ENCODE measurements at regions of chr5 and their contacts with region 1.

Region 1: DNA sequence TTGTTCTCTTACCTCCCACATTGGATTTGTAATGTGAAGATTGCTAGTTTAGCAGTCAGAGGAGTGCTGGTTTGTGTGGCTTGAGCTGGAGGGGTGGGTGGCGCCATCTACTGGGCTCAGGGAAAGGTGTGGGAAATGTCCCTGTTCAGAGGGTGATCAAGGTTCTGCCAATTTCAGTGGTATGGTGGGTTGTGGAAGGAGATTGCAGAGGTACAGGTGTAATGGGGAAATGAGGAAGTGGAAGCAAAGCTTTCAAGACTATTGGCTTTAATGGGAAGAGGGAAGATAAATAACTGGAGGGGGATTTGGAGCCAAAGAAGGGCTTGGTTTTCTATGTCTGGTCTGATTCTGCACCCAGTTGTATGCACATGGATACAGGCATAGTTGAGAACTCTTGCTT is 76.4 kb downstream of the OSMR start:
- DNase-seq: no peak
- H3K4me3 ChIP-seq: no peak overlapping the region
- H3K27ac ChIP-seq: peak overlapping the region; percentile 69 to 75
- H3K4me1 ChIP-seq: peaks cover 0 to 40% (median 29%) of the 10 kb centered on the region in 4 donors
- H3K27me3 ChIP-seq: no peaks in the 10 kb centered on the region
- CTCF ChIP-seq: peak; percentile 50 to 62

Region 2: GRCh38 chr5:38660194-38660668 is 262.0 kb before region 1 on chr5:
- intact Hi-C with region 1: no loop called
- DNase-seq: no peak
- H3K4me3 ChIP-seq: no peak overlapping the region
- H3K27ac ChIP-seq: no peak overlapping the region
- H3K4me1 ChIP-seq: peaks cover 0 to 23% (median 10%) of the 10 kb centered on the region in 4 donors
- H3K27me3 ChIP-seq: no peaks in the 10 kb centered on the region
- CTCF ChIP-seq: no peak

Region 3: GRCh38 chr5:38845526-38846378 is 76.4 kb before region 1 on chr5 and contains the start of gene OSMR:
- intact Hi-C with region 1: loop called (anchors 10 kb)
- DNase-seq: peak; percentile 95 to 99
- H3K4me3 ChIP-seq: peak within 1 kb of the TSS; percentile 80 to 93
- H3K27ac ChIP-seq: peak within 1 kb of the TSS; percentile 97 to 99
- H3K4me1 ChIP-seq: peaks cover 0 to 50% (median 23%) of the 10 kb centered on the region in 4 donors
- H3K27me3 ChIP-seq: no peaks in the 10 kb centered on the region
- CTCF ChIP-seq: peak in 1 of 2 experiments; percentile 28

Region 4: DNA sequence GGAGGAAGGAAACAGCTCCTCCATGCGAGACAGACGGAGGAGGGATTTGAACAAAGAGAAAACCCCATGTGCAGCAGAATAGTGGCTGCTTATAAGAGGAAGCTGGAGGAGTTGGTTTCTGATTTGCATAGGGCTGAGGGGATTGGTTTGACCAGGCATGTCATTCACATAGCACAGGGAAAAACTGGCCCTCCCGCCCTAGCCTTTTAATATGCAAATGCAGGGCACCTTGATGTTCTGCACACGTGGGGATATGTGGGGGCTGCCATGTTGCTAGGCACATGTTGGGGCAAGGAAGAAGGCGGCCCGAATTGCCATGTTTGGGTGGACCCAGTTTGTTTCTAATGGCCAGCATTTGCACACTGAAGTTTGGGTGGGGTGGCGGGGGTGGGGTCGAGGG is 34.2 kb before region 1 on chr5:
- intact Hi-C with region 1: no loop called
- DNase-seq: no peak
- H3K4me3 ChIP-seq: no peak overlapping the region
- H3K27ac ChIP-seq: no peak overlapping the region
- H3K4me1 ChIP-seq: no peaks in the 10 kb centered on the region
- H3K27me3 ChIP-seq: no peaks in the 10 kb centered on the region
- CTCF ChIP-seq: no peak

Measured in tibial artery (tissue), 4 donors.